Calu3 (cell line): ENCODE measurements at regions of chr12 and their contacts with region 1.

Region 1: GRCh38 chr12:67068761-67069450 is 200.3 kb upstream of the CAND1 start:
- DNase-seq: peak; percentile 85
- H3K4me3 Mint-ChIP-seq: peak overlapping the region; percentile 83
- H3K27ac Mint-ChIP-seq: peak overlapping the region; percentile 69
- H3K4me1 Mint-ChIP-seq: peaks cover 11% of the 10 kb centered on the region
- H3K27me3 Mint-ChIP-seq: no peaks in the 10 kb centered on the region
- CTCF ChIP-seq: no peak

Region 2: GRCh38 chr12:66903782-66904396 is 165.0 kb before region 1 on chr12:
- CTCF ChIA-PET with region 1: no interaction called
- intact Hi-C with region 1: loop called (anchors 1 kb)
- DNase-seq: no peak
- H3K4me3 Mint-ChIP-seq: no peak overlapping the region
- H3K27ac Mint-ChIP-seq: no peak overlapping the region
- H3K4me1 Mint-ChIP-seq: peaks cover 25% of the 10 kb centered on the region
- H3K27me3 Mint-ChIP-seq: no peaks in the 10 kb centered on the region
- CTCF ChIP-seq: no peak

Region 3: DNA sequence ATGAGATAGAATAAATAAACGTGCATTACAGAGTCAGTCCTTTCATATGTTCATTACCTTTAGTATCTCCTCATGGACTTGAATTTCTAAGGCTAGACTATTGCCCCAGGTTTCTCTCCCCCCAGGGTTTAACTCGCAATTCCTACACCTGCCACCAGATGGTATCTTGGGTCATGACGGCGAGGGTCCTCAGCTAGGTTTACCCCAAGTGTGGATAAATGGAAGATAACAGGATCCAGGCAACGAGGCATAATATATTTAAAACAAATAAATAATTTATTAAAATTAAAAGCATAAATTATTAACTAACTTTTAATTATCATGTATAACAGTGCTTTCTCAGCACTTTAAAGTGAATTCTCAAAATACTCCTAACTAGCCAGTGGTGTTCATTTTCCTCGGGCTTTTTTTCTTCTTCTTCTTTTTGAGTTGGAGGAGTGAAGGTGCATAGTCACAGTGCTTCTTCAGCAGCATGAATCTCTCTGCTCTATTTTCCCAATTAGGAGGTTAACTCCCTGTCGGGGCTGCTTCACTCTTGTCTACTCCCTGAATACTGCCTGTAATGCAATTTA is 43.3 kb before region 1 on chr12:
- CTCF ChIA-PET with region 1: interaction called, 3 read pairs
- intact Hi-C with region 1: loop called (anchors 5 kb)
- DNase-seq: peak; percentile 76
- H3K4me3 Mint-ChIP-seq: no peak overlapping the region
- H3K27ac Mint-ChIP-seq: no peak overlapping the region
- H3K4me1 Mint-ChIP-seq: peaks cover 18% of the 10 kb centered on the region
- H3K27me3 Mint-ChIP-seq: no peaks in the 10 kb centered on the region
- CTCF ChIP-seq: peak; percentile 85

Region 4: DNA sequence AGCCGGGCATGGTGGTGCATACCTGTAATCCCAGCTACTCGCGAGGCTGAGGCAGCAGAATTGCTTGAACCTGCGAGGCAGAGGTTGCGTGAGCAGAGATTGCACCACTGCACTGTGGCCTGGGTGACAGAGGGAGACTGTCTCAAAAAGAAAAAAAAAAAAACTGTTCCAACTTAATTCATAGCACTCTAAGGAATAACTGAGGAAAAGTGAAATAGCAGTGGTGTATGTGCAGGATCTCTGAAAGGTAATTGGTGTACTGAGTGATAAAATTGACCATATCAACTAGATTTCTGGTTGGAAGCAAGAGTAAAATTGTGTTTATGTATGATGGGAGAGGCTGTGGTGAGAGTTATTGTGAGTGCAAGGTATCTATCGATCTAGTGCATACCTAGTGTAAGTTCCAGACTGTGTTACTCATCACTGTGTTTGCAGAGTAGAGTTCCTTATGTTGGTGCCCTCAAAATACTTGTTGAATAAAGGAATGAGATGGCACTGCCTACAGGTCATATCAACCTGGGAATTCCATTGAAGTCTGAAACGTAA is 206.5 kb after region 1 on chr12:
- CTCF ChIA-PET with region 1: no interaction called
- intact Hi-C with region 1: no loop called
- DNase-seq: peak; percentile 48
- H3K4me3 Mint-ChIP-seq: peak overlapping the region; percentile 45
- H3K27ac Mint-ChIP-seq: peak overlapping the region; percentile 74
- H3K4me1 Mint-ChIP-seq: peaks cover 57% of the 10 kb centered on the region
- H3K27me3 Mint-ChIP-seq: no peaks in the 10 kb centered on the region
- CTCF ChIP-seq: no peak

Region 5: GRCh38 chr12:67534681-67535080 is 465.8 kb after region 1 on chr12:
- CTCF ChIA-PET with region 1: no interaction called
- intact Hi-C with region 1: no loop called
- DNase-seq: no peak
- H3K4me3 Mint-ChIP-seq: no peak overlapping the region
- H3K27ac Mint-ChIP-seq: no peak overlapping the region
- H3K4me1 Mint-ChIP-seq: peaks cover 18% of the 10 kb centered on the region
- H3K27me3 Mint-ChIP-seq: no peaks in the 10 kb centered on the region
- CTCF ChIP-seq: no peak

Region 6: GRCh38 chr12:69059483-69060457 is 1990.9 kb after region 1 on chr12:
- CTCF ChIA-PET with region 1: no interaction called
- intact Hi-C with region 1: no loop called
- DNase-seq: peak; percentile 19
- H3K4me3 Mint-ChIP-seq: no peak overlapping the region
- H3K27ac Mint-ChIP-seq: peak overlapping the region; percentile 19
- H3K4me1 Mint-ChIP-seq: peaks cover 27% of the 10 kb centered on the region
- H3K27me3 Mint-ChIP-seq: no peaks in the 10 kb centered on the region
- CTCF ChIP-seq: no peak